Sigmoid colon (tissue), 7 donors: ENCODE measurements at regions of chr10 and their contacts with region 1.

Region 1: DNA sequence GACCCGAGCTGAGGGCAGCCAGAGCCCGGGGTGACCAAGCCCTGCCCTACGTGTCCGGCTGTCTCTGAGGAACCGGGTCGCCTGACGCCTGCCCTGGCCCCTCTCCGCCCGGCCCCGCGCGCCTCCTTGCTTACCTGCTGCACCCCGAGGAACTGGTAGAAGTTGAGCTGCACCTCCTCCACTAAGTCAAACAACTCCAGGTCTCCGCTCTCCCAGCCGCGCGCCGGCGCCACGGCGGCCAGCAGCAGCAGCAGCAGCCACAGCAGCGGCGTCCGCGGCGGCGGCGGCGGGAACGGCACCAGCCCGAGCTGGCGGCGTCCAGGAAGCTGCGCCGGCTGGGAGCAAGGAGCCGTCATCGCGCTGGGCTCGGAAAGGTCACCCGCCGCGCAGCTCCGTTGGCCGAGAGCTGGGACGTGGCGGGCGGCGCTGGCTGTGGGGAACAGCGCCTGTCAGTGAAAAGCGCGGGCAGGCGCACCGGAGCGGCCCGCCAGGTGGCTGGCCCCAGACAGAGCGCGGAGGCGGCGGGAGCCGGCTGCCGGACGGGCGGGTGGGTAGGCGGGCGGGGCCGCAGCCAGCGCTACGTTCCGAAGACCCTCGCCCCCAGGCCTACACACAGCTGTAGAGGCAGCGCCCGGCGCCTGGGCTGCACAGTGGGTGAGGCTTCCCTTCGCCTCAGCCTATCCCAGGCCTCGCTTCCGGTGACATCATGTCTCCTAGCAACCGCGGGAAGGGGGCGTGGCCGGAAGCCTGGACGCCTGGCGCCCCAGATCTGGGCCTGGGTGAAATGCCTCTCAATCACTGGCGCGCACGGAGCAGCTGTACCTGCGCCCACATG is at the start of gene DNAJC1:
- DNase-seq: peak; percentile 98
- H3K4me3 ChIP-seq: peak within 1 kb of the TSS; percentile 73 to 91 (median 86)
- H3K27ac ChIP-seq: peak within 1 kb of the TSS; percentile 94 to 97 (median 97)
- H3K4me1 ChIP-seq: peaks cover 0 to 28% (median 19%) of the 10 kb centered on the region in 4 donors
- H3K27me3 ChIP-seq: no peaks in the 10 kb centered on the region
- CTCF ChIP-seq: no peak
- EP300 ChIP-seq: no peak
- POLR2A ChIP-seq: peak; percentile 68 to 69
- total RNA-seq, gene DNAJC1: 51.9 to 135 (median 74.3) TPM

Region 2: DNA sequence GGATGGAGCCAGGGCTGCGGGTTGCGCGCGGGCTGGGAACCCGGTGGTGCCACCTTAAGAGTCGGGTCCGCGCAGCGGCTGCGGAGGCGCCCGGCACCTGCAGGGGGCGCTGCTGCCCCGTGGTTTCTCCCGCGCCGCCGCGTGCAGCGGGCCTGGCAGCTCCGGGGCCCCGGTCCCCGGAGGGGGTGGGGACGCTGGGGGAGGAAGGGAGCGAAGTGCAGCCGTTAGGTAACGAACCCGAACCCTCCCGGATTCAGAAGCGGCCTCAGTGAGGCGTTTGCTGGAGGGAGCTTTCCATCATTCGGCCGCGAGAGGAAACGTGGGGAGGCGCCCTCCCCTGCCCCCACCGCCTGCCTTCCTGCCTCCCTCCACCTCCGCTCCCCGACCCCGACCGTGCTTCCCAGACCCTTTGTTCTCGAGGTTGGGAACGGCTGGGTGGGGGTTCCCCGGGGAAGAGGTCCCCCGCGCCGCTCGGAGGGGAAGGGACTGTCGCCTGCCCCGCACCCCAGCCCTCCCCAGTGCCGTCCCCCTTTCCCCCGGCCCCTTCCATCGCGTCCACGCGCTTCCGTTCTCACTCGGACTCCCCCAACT is 507.4 kb before region 1 on chr10:
- intact Hi-C with region 1: loop called (anchors 5 kb)
- DNase-seq: peak; percentile 86
- H3K4me3 ChIP-seq: peak overlapping the region; percentile 50 to 83 (median 66)
- H3K27ac ChIP-seq: peak overlapping the region; percentile 73 to 81 (median 74)
- H3K4me1 ChIP-seq: peaks cover 0 to 45% (median 20%) of the 10 kb centered on the region in 4 donors
- H3K27me3 ChIP-seq: no peaks in the 10 kb centered on the region
- CTCF ChIP-seq: peak; percentile 52 to 96 (median 88)
- EP300 ChIP-seq: no peak
- POLR2A ChIP-seq: no peak

Region 3: DNA sequence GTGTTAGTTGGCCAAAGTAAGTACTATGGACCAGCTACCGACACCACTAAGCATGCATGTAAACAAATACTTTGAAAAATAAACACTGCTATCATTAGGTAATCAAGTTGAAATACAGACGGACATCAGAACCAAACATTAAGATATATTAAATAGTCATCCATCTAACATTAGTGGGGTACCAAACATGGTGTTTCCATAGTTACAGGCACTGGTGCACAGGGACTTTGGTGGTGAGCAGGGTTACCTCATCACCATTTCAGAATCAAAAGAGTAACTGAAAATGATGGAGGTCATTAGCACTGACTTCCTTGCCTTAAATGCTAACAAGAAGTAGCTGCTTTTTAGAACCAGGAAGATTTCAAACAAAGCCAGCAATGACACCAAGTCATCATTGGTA is 190.6 kb after region 1 on chr10:
- intact Hi-C with region 1: no loop called
- DNase-seq: no peak
- H3K4me3 ChIP-seq: no peak overlapping the region
- H3K27ac ChIP-seq: no peak overlapping the region
- H3K4me1 ChIP-seq: no peaks in the 10 kb centered on the region
- H3K27me3 ChIP-seq: no peaks in the 10 kb centered on the region
- CTCF ChIP-seq: no peak
- EP300 ChIP-seq: no peak
- POLR2A ChIP-seq: no peak

Region 4: DNA sequence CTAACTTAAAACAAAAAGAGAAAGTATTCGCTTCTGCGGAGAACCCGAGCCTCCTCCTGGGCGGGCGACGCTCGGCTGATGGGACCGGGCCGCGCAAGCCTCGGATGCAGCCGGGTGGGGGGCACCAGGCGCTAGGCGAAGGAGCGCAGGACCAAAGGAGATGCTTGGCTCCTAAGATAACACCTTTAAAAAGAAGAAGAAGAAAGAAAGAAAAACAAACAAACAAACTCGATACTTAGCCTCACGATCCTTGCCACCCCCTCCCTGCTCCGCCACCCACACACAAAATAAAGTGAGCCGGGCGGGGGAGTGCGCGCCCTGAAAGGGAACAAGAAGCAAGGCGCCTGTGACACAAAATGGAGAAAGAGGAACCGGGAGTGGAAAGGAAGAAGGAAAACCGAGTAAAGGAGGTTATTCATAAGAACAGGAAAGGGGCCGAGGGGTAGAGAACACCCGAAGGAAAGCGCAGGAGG is 248.5 kb after region 1 on chr10:
- intact Hi-C with region 1: loop called (anchors 2 kb)
- DNase-seq: peak; percentile 79
- H3K4me3 ChIP-seq: peak overlapping the region; percentile 61 to 86 (median 74)
- H3K27ac ChIP-seq: peak overlapping the region; percentile 94 to 97 (median 96)
- H3K4me1 ChIP-seq: peaks cover 0 to 10% (median 5%) of the 10 kb centered on the region in 4 donors
- H3K27me3 ChIP-seq: no peaks in the 10 kb centered on the region
- CTCF ChIP-seq: no peak
- EP300 ChIP-seq: no peak
- POLR2A ChIP-seq: no peak

Region 5: GRCh38 chr10:22436884-22437619 is 433.8 kb after region 1 on chr10:
- intact Hi-C with region 1: loop called (anchors 5 kb)
- DNase-seq: peak; percentile 96
- H3K4me3 ChIP-seq: peak overlapping the region; percentile 56 to 82 (median 74)
- H3K27ac ChIP-seq: peak overlapping the region; percentile 95 to 98 (median 96)
- H3K4me1 ChIP-seq: peaks cover 0 to 18% (median 14%) of the 10 kb centered on the region in 4 donors
- H3K27me3 ChIP-seq: no peaks in the 10 kb centered on the region
- CTCF ChIP-seq: no peak
- EP300 ChIP-seq: no peak
- POLR2A ChIP-seq: peak; percentile 80 to 85

Region 6: DNA sequence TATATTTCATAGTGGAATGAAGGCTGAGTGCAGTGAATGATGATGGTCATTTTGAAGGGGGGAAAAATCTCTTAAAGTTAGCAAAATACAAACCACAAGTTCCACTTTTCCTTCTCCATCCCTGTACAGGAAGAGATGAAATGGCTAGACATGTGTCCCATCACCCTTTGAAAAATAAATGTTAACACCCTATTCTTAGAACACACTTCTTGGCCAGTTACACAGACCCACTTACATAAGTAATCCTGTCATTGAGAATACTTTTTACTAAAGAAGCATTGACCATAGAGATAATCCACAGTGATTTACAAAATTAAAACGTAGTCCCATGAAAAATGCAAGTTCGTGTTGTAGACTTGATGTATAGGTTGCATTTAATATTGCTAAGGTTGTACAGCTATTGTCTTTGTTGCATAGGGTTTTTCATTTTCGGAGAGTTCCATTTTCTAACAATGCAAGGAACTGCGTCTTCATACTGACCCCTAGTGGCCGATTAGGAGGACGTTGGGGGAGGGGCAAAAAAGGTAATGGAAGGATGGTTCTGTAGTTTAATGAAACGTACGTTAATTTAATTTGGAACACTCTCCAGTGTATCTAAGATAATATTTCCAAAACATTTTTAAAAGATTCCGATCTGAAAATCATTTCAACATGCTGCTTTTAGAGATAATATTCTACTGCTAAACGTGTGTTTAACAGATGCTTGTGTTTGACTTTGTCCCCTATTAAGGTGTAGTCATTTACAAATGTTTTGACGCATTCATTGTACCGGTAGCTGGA is 985.5 kb after region 1 on chr10:
- intact Hi-C with region 1: loop called (anchors 5 kb)
- DNase-seq: peak; percentile 73
- H3K4me3 ChIP-seq: no peak overlapping the region
- H3K27ac ChIP-seq: no peak overlapping the region
- H3K4me1 ChIP-seq: peaks cover 0 to 11% (median 4%) of the 10 kb centered on the region in 4 donors
- H3K27me3 ChIP-seq: no peaks in the 10 kb centered on the region
- CTCF ChIP-seq: peak; percentile 78 to 89 (median 85)
- EP300 ChIP-seq: no peak
- POLR2A ChIP-seq: no peak

Region 7: GRCh38 chr10:23438550-23439441 is 1435.5 kb after region 1 on chr10 and contains the start of gene OTUD1:
- intact Hi-C with region 1: loop called (anchors 5 kb)
- DNase-seq: peak; percentile 98
- H3K4me3 ChIP-seq: peak within 1 kb of the TSS; percentile 77 to 98 (median 84)
- H3K27ac ChIP-seq: peak within 1 kb of the TSS; percentile 96 to 99 (median 96)
- H3K4me1 ChIP-seq: peaks cover 0 to 34% (median 30%) of the 10 kb centered on the region in 4 donors
- H3K27me3 ChIP-seq: no peaks in the 10 kb centered on the region
- CTCF ChIP-seq: peak in 2 of 4 experiments; percentile 40 to 44
- EP300 ChIP-seq: peak in 1 of 4 donors; percentile 51
- POLR2A ChIP-seq: no peak
- total RNA-seq, gene OTUD1: 8.8 to 15.5 (median 12.4) TPM